GM12878 (cell line): ENCODE measurements at regions of chr5 and their contacts with region 1.

Region 1: DNA sequence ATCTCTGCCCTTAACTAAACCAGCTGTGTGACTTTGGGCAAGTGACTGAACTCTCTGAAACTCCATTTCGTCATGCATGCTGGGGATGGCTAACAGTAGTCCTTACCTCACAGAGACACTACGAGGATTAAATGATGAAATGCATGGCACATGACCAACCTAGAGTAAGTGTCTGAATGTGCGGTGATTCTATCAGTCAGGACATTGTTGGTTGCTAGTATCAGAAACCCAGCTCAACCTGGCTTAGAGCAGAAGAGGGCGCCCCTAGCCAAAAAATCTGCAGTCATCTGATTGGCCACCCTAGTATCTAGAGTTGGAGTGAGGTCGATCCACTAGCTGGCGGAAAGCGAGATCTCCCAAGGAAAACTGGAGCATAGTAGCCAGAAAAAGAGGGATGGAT is 25.2 kb downstream of the NEURL1B start:
- DNase-seq: no peak
- ATAC-seq: peak; percentile 55; the same call in 2 of the 3 replicates
- H3K4me3 ChIP-seq: no peak overlapping the region
- H3K27ac ChIP-seq: no peak overlapping the region
- H3K4me1 ChIP-seq: no peaks in the 10 kb centered on the region
- H3K27me3 ChIP-seq: peaks cover 0 to 1% of the 10 kb centered on the region in 2 experiments; a peak in 2 of 4 replicates
- CTCF ChIP-seq: peak; percentile 3 to 27 (median 14); a peak in 2 of 6 replicates
- EP300 ChIP-seq: no peak
- POLR2A ChIP-seq: no peak
- RAD21 ChIP-seq: peak; percentile 45

Region 2: DNA sequence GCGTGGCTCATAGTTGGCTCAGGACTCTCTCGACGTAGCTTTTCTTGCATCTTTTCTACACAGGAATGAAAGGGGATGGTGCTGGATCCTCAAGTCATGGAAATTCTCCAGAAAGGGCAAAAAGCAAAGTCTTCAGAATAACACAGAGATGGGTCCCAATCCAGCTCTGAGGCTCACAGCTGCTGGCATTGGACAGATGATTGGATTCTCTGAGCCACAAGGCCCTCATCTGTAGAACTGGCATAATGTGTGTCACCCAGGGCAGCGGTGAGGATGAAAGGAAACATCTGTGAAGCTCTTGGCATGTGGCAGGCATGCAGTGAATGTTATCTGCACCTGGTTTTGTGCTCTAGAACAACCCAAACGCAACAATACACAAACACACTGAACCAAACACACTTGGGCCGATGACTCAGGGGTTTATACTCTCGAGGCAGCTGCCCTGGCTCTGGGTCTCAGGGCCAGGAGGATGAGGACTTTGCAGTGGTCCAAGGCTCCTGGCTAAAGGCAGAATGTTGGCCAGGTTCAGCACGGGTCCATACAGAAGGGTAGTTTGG is 318.7 kb before region 1 on chr5:
- CTCF ChIA-PET with region 1: no interaction called
- POLR2A ChIA-PET with region 1: no interaction called
- RAD21 ChIA-PET with region 1: no interaction called
- SMC1A ChIA-PET with region 1: no interaction called
- in situ Hi-C with region 1: no loop called
- intact Hi-C with region 1: no loop called
- DNase-seq: no peak
- ATAC-seq: no peak
- H3K4me3 ChIP-seq: no peak overlapping the region
- H3K27ac ChIP-seq: no peak overlapping the region
- H3K4me1 ChIP-seq: no peaks in the 10 kb centered on the region
- H3K27me3 ChIP-seq: no peaks in the 10 kb centered on the region
- CTCF ChIP-seq: no peak
- EP300 ChIP-seq: no peak
- POLR2A ChIP-seq: no peak
- RAD21 ChIP-seq: no peak

Region 3: GRCh38 chr5:172697123-172698121 is 31.2 kb after region 1 on chr5:
- CTCF ChIA-PET with region 1: interaction called, 8 read pairs
- POLR2A ChIA-PET with region 1: no interaction called
- RAD21 ChIA-PET with region 1: interaction called, 6 read pairs
- SMC1A ChIA-PET with region 1: interaction called, 14 read pairs
- in situ Hi-C with region 1: no loop called
- intact Hi-C with region 1: loop called (anchors 1 kb)
- DNase-seq: peak; percentile 33
- ATAC-seq: peak; percentile 94
- H3K4me3 ChIP-seq: peak overlapping the region; percentile 75
- H3K27ac ChIP-seq: 0 out of 2 replicates have a peak overlapping the region, but pooled peaks have one; percentile 16
- H3K4me1 ChIP-seq: peaks cover 7% of the 10 kb centered on the region
- H3K27me3 ChIP-seq: no peaks in the 10 kb centered on the region; a peak in 2 of 4 replicates
- CTCF ChIP-seq: peak; percentile 89 to 98 (median 91)
- EP300 ChIP-seq: no peak
- POLR2A ChIP-seq: peak; percentile 65
- RAD21 ChIP-seq: peak; percentile 92